ENCODE measurements at regions of chr2 and their contacts with region 1.

Region 1: DNA sequence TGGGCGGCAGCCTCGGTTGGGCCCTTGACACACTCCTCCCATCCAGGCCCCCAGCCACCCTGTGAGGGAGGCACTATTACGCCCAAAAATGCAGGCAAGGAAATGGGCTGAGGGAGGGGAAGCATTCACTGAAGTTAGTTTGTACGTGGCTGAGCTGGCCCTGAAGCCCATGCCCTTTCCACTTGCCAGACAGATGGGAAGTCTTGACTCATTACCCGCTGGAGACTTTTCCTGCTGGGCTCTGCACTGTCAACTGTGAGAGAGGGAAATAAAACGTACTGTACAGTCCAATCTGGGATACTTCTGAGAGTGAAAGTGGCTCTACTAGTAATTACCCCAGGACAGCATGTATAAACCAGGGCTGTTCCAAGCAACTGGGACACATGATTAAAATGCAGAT is 125.9 kb downstream of the MSH2 start:
- DNase-seq: peak; percentile 71
- H3K4me3 ChIP-seq: no peak overlapping the region
- H3K27ac ChIP-seq: peak overlapping the region; percentile 12
- H3K4me1 ChIP-seq: peaks cover 17% of the 10 kb centered on the region
- H3K27me3 ChIP-seq: no peaks in the 10 kb centered on the region
- CTCF ChIP-seq: no peak
- POLR2A ChIP-seq: no peak

Region 2: DNA sequence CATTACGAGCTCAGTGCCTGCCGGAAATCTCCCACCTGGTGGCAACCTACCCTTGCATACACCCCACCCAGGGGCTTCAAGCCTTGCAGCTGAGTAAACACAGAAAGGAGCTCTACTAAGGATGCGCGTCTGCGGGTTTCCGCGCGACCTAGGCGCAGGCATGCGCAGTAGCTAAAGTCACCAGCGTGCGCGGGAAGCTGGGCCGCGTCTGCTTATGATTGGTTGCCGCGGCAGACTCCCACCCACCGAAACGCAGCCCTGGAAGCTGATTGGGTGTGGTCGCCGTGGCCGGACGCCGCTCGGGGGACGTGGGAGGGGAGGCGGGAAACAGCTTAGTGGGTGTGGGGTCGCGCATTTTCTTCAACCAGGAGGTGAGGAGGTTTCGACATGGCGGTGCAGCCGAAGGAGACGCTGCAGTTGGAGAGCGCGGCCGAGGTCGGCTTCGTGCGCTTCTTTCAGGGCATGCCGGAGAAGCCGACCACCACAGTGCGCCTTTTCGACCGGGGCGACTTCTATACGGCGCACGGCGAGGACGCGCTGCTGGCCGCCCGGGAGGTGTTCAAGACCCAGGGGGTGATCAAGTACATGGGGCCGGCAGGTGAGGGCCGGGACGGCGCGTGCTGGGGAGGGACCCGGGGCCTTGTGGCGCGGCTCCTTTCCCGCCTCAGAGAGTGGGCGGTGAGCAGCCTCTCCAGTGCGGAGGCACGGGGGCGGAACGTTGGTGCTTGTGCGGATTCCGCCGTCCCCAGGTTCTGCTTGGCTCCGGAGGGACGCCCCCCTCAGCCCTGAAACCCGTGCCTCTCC is 125.9 kb before region 1 on chr2 and contains the start of gene MSH2:
- CTCF ChIA-PET with region 1: interaction called, 3 read pairs
- POLR2A ChIA-PET with region 1: no interaction called
- dilution Hi-C with region 1: no loop called
- intact Hi-C with region 1: loop called (anchors 5 kb)
- DNase-seq: peak; percentile 96
- H3K4me3 ChIP-seq: peak within 1 kb of the TSS; percentile 46 to 80 (median 76)
- H3K27ac ChIP-seq: peak within 1 kb of the TSS; percentile 44
- H3K4me1 ChIP-seq: peaks cover 14% of the 10 kb centered on the region
- H3K27me3 ChIP-seq: no peaks in the 10 kb centered on the region
- CTCF ChIP-seq: no peak
- POLR2A ChIP-seq: peak; percentile 78
- total RNA-seq, gene MSH2: 28.0 and 30.5 TPM in 2 replicates

Region 3: DNA sequence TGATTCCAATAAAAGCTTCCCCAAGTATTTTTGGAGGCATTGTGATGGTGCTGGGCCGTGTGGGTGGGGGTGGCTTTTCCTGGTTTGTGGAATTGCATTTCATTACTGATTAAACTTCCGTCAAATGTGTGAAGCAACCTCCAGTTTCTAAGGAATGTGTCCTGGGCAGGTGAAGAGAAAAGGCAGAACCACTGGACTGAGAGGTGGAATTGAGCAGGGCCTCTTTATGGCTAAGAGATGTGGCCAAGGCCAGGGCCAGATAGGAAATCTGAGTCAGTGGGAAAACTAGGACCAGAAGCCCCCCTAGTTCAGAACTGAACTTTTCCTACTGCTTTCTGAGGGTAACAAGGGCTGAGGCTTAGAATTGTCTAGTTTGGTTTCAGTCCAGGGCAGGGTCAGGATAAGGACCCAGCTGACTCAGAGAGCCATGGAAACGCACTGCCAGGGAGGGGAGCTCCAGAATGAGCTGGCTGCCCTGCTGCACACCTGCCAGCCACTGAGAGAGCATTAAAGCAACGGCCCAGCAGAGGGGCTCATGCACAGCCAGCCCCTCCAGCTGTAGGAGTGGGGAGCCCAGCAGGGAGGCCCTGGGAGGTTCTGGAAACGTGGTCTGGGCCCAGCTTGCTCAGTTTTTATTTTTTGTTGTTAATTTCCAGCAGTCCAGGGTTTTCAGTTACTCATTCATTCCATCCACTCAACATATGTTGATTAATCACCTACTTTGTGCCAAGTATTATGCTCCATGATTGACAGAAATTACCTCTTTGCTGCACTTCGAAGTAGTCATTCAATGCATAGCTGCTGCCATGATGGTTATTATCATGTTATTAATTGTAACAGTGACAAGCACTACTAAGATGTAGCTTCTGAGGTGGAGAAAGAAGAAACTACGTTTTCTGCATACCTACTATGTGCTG is 30.2 kb after region 1 on chr2:
- CTCF ChIA-PET with region 1: no interaction called
- POLR2A ChIA-PET with region 1: no interaction called
- dilution Hi-C with region 1: no loop called
- intact Hi-C with region 1: no loop called
- DNase-seq: no peak
- H3K4me3 ChIP-seq: no peak overlapping the region
- H3K27ac ChIP-seq: no peak overlapping the region
- H3K4me1 ChIP-seq: no peaks in the 10 kb centered on the region
- H3K27me3 ChIP-seq: peaks cover 4 to 5% of the 10 kb centered on the region in 2 experiments
- CTCF ChIP-seq: no peak
- POLR2A ChIP-seq: no peak